ENCODE measurements at regions of chr7 and their contacts with region 1.

Region 1: GRCh38 chr7:45136106-45137060 is 21.2 kb upstream of the RAMP3 start:
- DNase-seq: no peak
- H3K4me3 ChIP-seq: no peak overlapping the region
- H3K27ac ChIP-seq: no peak overlapping the region
- H3K4me1 ChIP-seq: no peaks in the 10 kb centered on the region
- H3K27me3 ChIP-seq: no peaks in the 10 kb centered on the region
- CTCF ChIP-seq: peak in 2 of 3 experiments; percentile 83 to 93; a peak in 3 of 4 replicates
- EP300 ChIP-seq: no peak
- POLR2A ChIP-seq: no peak
- RAD21 ChIP-seq: peak; percentile 94

Region 2: DNA sequence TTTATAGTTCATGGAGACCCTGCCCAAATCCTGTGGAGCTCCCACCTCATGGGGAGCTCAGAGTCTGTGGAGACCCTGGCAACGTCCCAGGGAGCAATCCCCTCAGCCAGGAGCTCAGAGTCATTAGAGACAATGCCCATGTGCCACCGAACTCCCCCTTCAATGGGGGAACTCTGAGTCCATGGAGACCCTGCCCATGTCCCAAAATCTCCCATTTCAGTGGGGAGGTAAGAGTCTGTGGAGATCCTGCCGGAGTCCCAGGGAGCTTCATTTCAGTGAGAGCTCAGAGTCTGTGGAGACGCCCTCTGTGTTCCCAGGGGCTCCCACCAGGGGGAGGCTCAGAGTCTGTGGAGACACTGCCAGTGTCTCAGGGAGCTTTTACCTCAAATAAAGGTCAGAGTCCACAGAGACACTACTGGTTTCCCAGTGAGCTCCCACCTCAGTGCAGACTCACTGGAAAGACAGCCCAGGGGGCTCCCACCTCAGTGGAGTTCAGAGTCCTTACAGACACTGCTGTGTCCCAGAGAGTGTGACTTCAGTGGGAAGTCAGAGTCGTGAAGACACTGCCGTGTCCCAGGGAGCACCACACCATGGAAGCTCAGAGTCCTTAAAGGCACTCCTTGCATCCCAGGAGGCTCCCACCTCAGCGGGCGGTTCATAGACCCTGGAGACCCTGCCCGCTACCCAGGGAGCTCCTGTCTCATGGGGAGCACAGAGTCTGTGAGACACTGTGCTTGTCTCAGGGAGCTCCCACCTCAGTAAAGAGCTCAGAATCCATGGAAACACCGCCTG is 162.6 kb before region 1 on chr7:
- CTCF ChIA-PET with region 1: interaction called, 105 read pairs
- POLR2A ChIA-PET with region 1: interaction called, 6 read pairs
- DNase-seq: no peak
- H3K4me3 ChIP-seq: no peak overlapping the region
- H3K27ac ChIP-seq: no peak overlapping the region
- H3K4me1 ChIP-seq: no peaks in the 10 kb centered on the region; a peak in 1 of 7 replicates
- H3K27me3 ChIP-seq: no peaks in the 10 kb centered on the region
- CTCF ChIP-seq: peak in 2 of 3 experiments; percentile 41 to 42; a peak in 3 of 4 replicates
- EP300 ChIP-seq: no peak
- POLR2A ChIP-seq: no peak
- RAD21 ChIP-seq: peak; percentile 37 to 47

Region 3: DNA sequence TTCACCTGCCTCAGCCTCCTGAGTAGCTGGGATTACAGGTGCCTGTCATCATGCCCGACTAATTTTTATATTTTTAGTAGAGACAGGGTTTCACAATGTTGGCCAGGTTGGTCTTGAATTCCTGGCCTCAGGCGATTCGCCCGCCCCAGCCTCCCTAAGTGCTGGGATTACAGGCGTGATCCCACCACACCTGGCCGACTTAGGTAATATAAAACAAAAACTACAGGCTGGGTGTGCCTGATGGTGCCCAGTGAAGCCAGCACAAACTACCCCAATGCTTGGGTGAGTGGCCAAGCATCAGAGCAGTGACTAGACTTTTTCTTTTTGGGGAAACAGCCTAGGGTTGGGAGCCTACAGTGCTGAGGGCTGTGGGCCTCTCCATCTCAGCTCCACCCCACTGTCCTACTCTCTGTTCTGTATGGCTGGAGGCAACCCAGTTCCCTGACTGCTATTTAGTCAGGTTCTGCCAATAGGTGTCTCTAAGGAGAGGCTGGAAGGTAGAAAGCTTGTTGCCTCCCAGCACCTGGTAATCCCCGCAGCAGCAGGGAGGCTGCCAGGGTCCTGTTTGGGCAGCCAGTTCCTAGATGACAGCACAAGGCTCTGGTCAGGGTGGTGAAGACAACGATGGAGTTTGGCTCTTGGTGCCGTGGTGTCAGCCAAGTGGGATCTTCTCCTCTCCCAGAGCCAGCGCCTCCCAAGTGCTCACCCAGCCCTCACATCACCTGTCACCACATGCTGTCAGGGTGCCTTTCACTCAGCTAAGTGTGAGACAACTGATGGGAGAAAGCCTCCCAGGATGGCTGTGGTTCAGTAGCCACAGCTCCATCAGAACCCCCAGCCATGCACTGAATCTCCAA is 37.2 kb before region 1 on chr7:
- CTCF ChIA-PET with region 1: interaction called, 10 read pairs
- POLR2A ChIA-PET with region 1: interaction called, 7 read pairs
- DNase-seq: no peak
- H3K4me3 ChIP-seq: no peak overlapping the region
- H3K27ac ChIP-seq: no peak overlapping the region
- H3K4me1 ChIP-seq: no peaks in the 10 kb centered on the region
- H3K27me3 ChIP-seq: no peaks in the 10 kb centered on the region
- CTCF ChIP-seq: no peak
- EP300 ChIP-seq: no peak
- POLR2A ChIP-seq: peak in 1 of 2 experiments; percentile 42; a peak in 1 of 3 replicates
- RAD21 ChIP-seq: peak in 1 of 2 experiments; percentile 8; a peak in 1 of 4 replicates

Region 4: DNA sequence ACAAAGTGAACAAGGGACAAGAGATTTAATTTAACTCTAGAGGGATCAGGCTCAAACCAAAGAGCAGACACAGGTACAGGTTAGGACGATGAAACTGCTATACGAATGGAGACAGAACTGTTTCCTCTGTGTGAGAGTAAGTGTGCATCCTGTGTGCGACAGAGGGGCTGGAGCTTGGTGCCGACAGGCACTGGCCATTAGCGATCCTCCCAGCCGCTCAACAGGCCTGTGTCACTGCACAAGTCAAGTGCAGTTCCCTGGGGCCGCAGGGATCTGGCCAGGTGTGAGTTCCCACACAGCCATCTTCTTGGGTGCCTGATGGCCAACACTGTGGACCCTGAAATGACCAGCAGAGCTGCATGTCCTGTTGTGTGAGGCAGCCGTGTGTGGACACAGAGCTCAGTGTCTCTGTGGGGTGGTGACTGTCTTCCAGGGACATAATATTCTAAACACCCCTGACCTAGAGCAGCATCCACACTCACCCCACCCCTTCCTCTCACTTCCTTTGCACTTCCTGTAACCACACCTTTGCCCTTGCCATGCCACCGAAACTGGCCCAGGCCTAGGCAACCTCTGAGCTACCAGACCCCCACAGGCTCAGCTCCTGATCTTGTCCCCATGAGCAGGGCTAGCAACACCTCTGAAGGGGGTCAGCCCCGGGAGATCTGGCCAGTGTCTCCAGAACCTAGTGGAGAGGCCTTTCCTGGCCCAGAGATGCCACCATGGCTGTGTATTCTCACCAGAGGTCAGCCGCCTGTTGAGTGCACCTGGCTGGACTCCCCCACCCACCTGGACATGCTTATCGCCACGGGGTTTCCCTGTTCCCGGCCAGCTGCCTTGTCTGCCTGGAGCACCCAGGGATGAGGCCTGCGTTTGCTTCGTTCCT is 13.2 kb before region 1 on chr7:
- CTCF ChIA-PET with region 1: interaction called, 39 read pairs
- POLR2A ChIA-PET with region 1: interaction called, 4 read pairs
- DNase-seq: no peak
- H3K4me3 ChIP-seq: peak overlapping the region in 1 of 4 experiments; percentile 5; a peak in 1 of 8 replicates
- H3K27ac ChIP-seq: no peak overlapping the region
- H3K4me1 ChIP-seq: peaks cover 0 to 13% (median 10%) of the 10 kb centered on the region in 4 experiments; a peak in 6 of 7 replicates
- H3K27me3 ChIP-seq: no peaks in the 10 kb centered on the region
- CTCF ChIP-seq: no peak
- EP300 ChIP-seq: no peak
- POLR2A ChIP-seq: no peak
- RAD21 ChIP-seq: no peak

Region 5: DNA sequence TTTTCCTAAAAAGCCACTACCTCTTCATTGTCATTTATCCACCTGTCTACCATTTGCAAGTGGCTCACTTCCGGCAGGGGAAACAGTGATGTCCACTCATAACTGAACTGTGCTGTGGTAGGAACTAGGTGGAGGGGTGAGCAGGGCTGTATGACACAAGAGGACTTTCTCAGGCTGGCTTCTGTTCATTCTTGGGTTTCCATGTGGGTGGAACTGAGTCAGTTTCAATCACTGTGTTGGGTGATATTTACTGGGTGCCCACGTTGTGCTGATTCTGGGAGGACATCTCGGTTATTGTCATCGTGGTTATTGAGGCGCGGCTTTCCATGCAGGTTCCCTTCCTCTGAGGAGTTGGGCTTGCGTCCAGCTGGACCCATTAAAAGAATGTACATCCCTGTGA is 60.0 kb after region 1 on chr7:
- CTCF ChIA-PET with region 1: no interaction called
- POLR2A ChIA-PET with region 1: no interaction called
- DNase-seq: no peak
- H3K4me3 ChIP-seq: no peak overlapping the region
- H3K27ac ChIP-seq: no peak overlapping the region
- H3K4me1 ChIP-seq: no peaks in the 10 kb centered on the region
- H3K27me3 ChIP-seq: no peaks in the 10 kb centered on the region
- CTCF ChIP-seq: no peak
- EP300 ChIP-seq: no peak
- POLR2A ChIP-seq: no peak
- RAD21 ChIP-seq: no peak

Region 6: DNA sequence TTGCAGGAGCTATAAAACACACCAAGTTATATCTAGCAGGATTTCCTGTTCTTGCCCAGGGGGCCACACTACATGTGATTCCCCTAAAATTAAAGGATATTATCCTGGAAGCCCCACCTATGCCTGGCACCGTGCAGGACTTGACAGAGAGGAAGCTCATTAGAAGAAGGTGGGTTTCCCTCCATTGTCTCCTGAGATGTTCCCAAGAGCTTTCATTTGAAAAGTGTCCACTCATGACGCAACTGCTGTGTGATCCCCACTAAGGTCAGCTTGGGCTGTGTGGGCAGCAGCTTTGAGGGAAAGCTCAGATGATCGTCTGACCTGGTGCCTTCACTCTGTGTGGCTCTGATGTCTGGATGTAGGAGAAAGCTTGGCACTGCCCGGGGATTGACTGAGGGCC is 74.7 kb after region 1 on chr7:
- CTCF ChIA-PET with region 1: no interaction called
- POLR2A ChIA-PET with region 1: no interaction called
- DNase-seq: no peak
- H3K4me3 ChIP-seq: no peak overlapping the region
- H3K27ac ChIP-seq: no peak overlapping the region
- H3K4me1 ChIP-seq: no peaks in the 10 kb centered on the region; a peak in 1 of 7 replicates
- H3K27me3 ChIP-seq: no peaks in the 10 kb centered on the region
- CTCF ChIP-seq: no peak
- EP300 ChIP-seq: no peak
- POLR2A ChIP-seq: no peak
- RAD21 ChIP-seq: no peak

Measured in H1 (cell line).